ENCODE measurements at regions of chr9 and their contacts with region 1.

Region 1: GRCh38 chr9:137070201-137070905 is at the start of gene SAPCD2:
- DNase-seq: peak; percentile 96
- H3K4me3 Mint-ChIP-seq: peak within 1 kb of the TSS; percentile 80
- H3K27ac Mint-ChIP-seq: peak within 1 kb of the TSS; percentile 68
- H3K4me1 Mint-ChIP-seq: peaks cover 20% of the 10 kb centered on the region
- H3K27me3 Mint-ChIP-seq: no peaks in the 10 kb centered on the region
- total RNA-seq, gene SAPCD2: 22.8 and 23.8 TPM in 2 replicates

Region 2: DNA sequence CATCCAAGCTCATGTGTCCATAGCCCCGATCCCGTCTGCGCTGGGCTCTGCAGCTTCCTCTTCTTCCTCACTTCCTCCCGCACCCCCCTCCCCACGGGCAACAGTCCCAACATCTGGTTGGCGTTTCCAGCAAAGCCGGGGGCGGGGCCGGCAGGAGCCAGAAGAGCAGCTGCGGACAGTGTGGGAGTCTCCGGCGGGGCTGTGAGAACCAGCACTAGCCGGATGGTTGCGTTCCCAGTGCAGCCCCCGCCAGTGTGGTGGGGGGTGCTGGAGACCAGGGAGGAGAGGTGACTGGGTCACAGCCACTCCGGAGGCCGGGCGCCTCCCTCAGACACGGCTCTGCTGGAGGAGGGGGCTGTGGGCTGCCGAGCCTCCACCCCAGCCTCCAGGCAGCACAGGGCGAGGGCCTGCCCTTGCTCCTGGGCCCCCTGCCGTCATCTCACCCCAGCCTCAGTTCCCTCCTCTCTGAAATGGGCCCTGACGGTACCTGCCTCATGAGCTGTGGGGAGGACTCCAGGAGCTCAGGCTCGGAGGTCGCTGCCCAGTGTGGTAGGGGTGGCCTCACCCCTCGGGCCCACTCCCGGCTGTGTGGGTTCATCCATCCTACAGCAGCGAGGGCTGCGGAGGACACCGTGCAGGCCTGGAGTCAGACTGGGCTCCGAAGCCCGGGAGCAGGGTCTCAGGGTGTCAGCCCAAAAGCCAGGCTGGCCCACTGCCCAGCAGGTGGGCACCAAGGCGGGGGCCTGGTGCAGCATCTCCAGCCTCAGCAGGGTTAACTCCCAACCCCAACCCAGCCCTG is 483.0 kb before region 1 on chr9:
- intact Hi-C with region 1: no loop called
- DNase-seq: no peak
- H3K4me3 Mint-ChIP-seq: no peak overlapping the region
- H3K27ac Mint-ChIP-seq: no peak overlapping the region
- H3K4me1 Mint-ChIP-seq: peaks cover 13% of the 10 kb centered on the region
- H3K27me3 Mint-ChIP-seq: no peaks in the 10 kb centered on the region

Region 3: GRCh38 chr9:137086531-137087408 is 16.4 kb after region 1 on chr9 and contains the start of gene MAN1B1:
- intact Hi-C with region 1: loop called (anchors 2 kb)
- DNase-seq: peak; percentile 100
- H3K4me3 Mint-ChIP-seq: peak within 1 kb of the TSS; percentile 94
- H3K27ac Mint-ChIP-seq: peak within 1 kb of the TSS; percentile 98
- H3K4me1 Mint-ChIP-seq: peaks cover 35% of the 10 kb centered on the region
- H3K27me3 Mint-ChIP-seq: peaks cover 3% of the 10 kb centered on the region
- total RNA-seq, gene MAN1B1: 49.7 and 50.1 TPM in 2 replicates

Region 4: GRCh38 chr9:137150617-137151457 is 80.5 kb after region 1 on chr9:
- intact Hi-C with region 1: no loop called
- DNase-seq: peak; percentile 86
- H3K4me3 Mint-ChIP-seq: no peak overlapping the region
- H3K27ac Mint-ChIP-seq: peak overlapping the region; percentile 58
- H3K4me1 Mint-ChIP-seq: peaks cover 2% of the 10 kb centered on the region
- H3K27me3 Mint-ChIP-seq: peaks cover 2% of the 10 kb centered on the region

Measured in activated CD4-positive, alpha-beta T cell treated with anti-CD3 and anti-CD28 coated beads, Interleukin-2, amount 10 ng/mL, durations not matched to agents 24 days and 14 days (primary cell).